MCF 10A (cell line): ENCODE measurements at regions of chr3 and their contacts with region 1.

Region 1: GRCh38 chr3:17742108-17742879 is at the start of gene TBC1D5:
- DNase-seq: peak; percentile 97
- H3K4me3 Mint-ChIP-seq: peak within 1 kb of the TSS; percentile 93
- H3K27ac Mint-ChIP-seq: peak within 1 kb of the TSS; percentile 90
- H3K4me1 Mint-ChIP-seq: peaks cover 21% of the 10 kb centered on the region
- H3K27me3 Mint-ChIP-seq: no peaks in the 10 kb centered on the region
- CTCF ChIP-seq: no peak
- total RNA-seq, gene TBC1D5: 43.3 and 51.0 TPM in 2 replicates

Region 2: GRCh38 chr3:17579289-17580031 is 162.8 kb before region 1 on chr3:
- CTCF ChIA-PET with region 1: no interaction called
- POLR2A ChIA-PET with region 1: interaction called, 10 read pairs
- intact Hi-C with region 1: no loop called
- DNase-seq: peak; percentile 33
- H3K4me3 Mint-ChIP-seq: no peak overlapping the region
- H3K27ac Mint-ChIP-seq: no peak overlapping the region
- H3K4me1 Mint-ChIP-seq: peaks cover 11% of the 10 kb centered on the region
- H3K27me3 Mint-ChIP-seq: no peaks in the 10 kb centered on the region
- CTCF ChIP-seq: no peak

Region 3: GRCh38 chr3:17629400-17629799 is 112.9 kb before region 1 on chr3:
- CTCF ChIA-PET with region 1: no interaction called
- POLR2A ChIA-PET with region 1: no interaction called
- intact Hi-C with region 1: no loop called
- DNase-seq: no peak
- H3K4me3 Mint-ChIP-seq: no peak overlapping the region
- H3K27ac Mint-ChIP-seq: no peak overlapping the region
- H3K4me1 Mint-ChIP-seq: peaks cover 4% of the 10 kb centered on the region
- H3K27me3 Mint-ChIP-seq: no peaks in the 10 kb centered on the region
- CTCF ChIP-seq: no peak

Region 4: GRCh38 chr3:17639765-17640164 is 102.5 kb before region 1 on chr3:
- CTCF ChIA-PET with region 1: interaction called, 4 read pairs
- POLR2A ChIA-PET with region 1: interaction called, 26 read pairs
- intact Hi-C with region 1: loop called (anchors 2 kb)
- DNase-seq: peak; percentile 97
- H3K4me3 Mint-ChIP-seq: peak overlapping the region; percentile 22
- H3K27ac Mint-ChIP-seq: peak overlapping the region; percentile 92
- H3K4me1 Mint-ChIP-seq: peaks cover 29% of the 10 kb centered on the region
- H3K27me3 Mint-ChIP-seq: no peaks in the 10 kb centered on the region
- CTCF ChIP-seq: no peak

Region 5: GRCh38 chr3:17645072-17645698 is 97.1 kb before region 1 on chr3:
- CTCF ChIA-PET with region 1: interaction called, 4 read pairs
- POLR2A ChIA-PET with region 1: interaction called, 26 read pairs
- intact Hi-C with region 1: loop called (anchors 2 kb)
- DNase-seq: peak; percentile 81
- H3K4me3 Mint-ChIP-seq: no peak overlapping the region
- H3K27ac Mint-ChIP-seq: no peak overlapping the region
- H3K4me1 Mint-ChIP-seq: no peaks in the 10 kb centered on the region
- H3K27me3 Mint-ChIP-seq: no peaks in the 10 kb centered on the region
- CTCF ChIP-seq: peak; percentile 56

Region 6: GRCh38 chr3:17730318-17730967 is 11.9 kb before region 1 on chr3:
- CTCF ChIA-PET with region 1: no interaction called
- POLR2A ChIA-PET with region 1: interaction called, 17 read pairs
- intact Hi-C with region 1: no loop called
- DNase-seq: peak; percentile 74
- H3K4me3 Mint-ChIP-seq: no peak overlapping the region
- H3K27ac Mint-ChIP-seq: peak overlapping the region; percentile 16
- H3K4me1 Mint-ChIP-seq: peaks cover 6% of the 10 kb centered on the region
- H3K27me3 Mint-ChIP-seq: no peaks in the 10 kb centered on the region
- CTCF ChIP-seq: no peak

Region 7: GRCh38 chr3:17831366-17831765 is 89.1 kb after region 1 on chr3:
- CTCF ChIA-PET with region 1: no interaction called
- POLR2A ChIA-PET with region 1: interaction called, 8 read pairs
- intact Hi-C with region 1: loop called (anchors 5 kb)
- DNase-seq: peak; percentile 30
- H3K4me3 Mint-ChIP-seq: no peak overlapping the region
- H3K27ac Mint-ChIP-seq: no peak overlapping the region
- H3K4me1 Mint-ChIP-seq: peaks cover 20% of the 10 kb centered on the region
- H3K27me3 Mint-ChIP-seq: no peaks in the 10 kb centered on the region
- CTCF ChIP-seq: no peak

Region 8: DNA sequence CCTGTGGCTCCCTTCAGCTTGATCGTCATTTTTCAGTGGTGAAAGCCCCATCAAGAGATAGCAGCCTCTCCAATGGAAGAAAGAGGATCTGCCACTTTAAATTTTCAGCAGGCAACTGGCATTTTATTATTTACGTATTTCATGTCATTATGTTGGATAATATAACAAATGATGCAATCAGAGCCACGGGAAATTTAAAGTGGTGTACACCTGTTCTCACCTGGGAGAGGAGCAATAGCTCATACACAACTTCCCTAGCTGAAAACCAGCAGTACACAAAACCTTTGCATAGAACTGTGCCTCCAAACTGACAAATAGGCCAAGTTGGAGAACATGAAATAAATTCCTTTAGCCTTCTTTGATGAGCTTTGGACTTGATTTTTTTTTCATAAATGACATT is 545.9 kb after region 1 on chr3:
- CTCF ChIA-PET with region 1: no interaction called
- POLR2A ChIA-PET with region 1: no interaction called
- intact Hi-C with region 1: no loop called
- DNase-seq: no peak
- H3K4me3 Mint-ChIP-seq: no peak overlapping the region
- H3K27ac Mint-ChIP-seq: no peak overlapping the region
- H3K4me1 Mint-ChIP-seq: no peaks in the 10 kb centered on the region
- H3K27me3 Mint-ChIP-seq: no peaks in the 10 kb centered on the region
- CTCF ChIP-seq: no peak